Panc1 (cell line): ENCODE measurements at regions of chr17 and their contacts with region 1.

Region 1: DNA sequence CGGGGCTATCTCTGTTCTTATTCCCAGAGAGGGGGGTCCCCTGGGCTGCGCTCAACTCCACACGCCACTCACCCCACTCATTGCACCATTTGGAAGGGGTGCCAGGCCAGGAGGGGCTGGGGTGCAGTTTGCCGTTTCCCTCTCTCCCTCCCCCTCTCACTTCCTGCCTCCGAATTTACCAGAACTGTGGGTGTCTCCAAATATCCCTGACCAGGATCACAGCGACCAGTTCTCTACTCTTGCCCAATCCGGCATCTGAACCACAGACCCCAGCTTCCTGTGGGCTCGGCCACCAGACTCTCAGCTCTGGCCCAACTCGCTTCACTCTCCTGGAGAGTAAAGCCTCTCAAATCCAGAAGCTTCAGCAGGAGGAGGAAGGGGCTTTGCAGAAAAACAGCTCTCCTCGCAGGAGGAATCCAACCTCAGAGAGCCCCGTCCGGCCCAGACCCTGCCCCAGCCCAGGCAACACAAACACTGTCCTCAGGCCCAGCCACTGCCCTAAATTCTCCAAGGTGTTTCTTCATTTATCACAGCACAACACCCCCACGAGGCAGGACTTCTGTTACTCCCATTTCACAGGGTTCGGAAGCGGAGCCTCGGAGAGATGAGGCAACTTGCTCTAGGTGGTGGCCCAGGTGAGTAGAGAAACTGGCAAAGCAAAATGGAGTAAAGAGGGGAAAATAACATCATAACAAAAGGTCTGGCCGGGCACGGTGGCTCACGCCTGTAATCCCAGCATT is 423 bp upstream of the ASGR2 start:
- DNase-seq: no peak
- ATAC-seq: no peak
- H3K4me3 ChIP-seq: no peak overlapping the region
- H3K27ac ChIP-seq: no peak overlapping the region
- H3K4me1 ChIP-seq: no peaks in the 10 kb centered on the region
- H3K27me3 ChIP-seq: no peaks in the 10 kb centered on the region
- CTCF ChIP-seq: no peak

Region 2: DNA sequence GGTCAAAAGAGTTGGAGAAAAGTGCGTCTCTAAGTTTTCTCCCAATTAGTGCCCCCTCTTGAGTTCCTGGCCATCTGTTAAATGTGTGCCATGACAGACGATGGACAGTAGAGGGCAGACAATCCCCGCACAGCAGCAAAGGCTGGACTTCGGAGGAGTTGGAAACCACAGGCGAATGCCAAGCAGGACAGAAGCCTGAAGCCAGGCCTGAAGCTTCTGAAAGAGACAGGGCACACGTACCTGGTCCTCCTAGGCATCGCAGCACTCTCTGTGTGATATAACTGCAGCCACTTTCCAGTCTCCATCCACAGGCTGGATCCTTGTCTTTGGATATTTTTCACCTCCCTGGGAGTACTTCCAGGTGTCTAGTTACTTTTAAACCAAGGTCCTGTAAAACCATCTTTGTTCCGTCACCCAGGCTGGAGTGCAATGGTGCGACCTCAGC is 448.9 kb before region 1 on chr17:
- CTCF ChIA-PET with region 1: no interaction called
- POLR2A ChIA-PET with region 1: no interaction called
- in situ Hi-C with region 1: no loop called
- intact Hi-C with region 1: no loop called
- DNase-seq: no peak
- ATAC-seq: peak; percentile 93
- H3K4me3 ChIP-seq: no peak overlapping the region
- H3K27ac ChIP-seq: no peak overlapping the region
- H3K4me1 ChIP-seq: no peaks in the 10 kb centered on the region
- H3K27me3 ChIP-seq: peaks cover 3% of the 10 kb centered on the region; the same call in 1 of the 2 replicates
- CTCF ChIP-seq: peak; percentile 92

Region 3: DNA sequence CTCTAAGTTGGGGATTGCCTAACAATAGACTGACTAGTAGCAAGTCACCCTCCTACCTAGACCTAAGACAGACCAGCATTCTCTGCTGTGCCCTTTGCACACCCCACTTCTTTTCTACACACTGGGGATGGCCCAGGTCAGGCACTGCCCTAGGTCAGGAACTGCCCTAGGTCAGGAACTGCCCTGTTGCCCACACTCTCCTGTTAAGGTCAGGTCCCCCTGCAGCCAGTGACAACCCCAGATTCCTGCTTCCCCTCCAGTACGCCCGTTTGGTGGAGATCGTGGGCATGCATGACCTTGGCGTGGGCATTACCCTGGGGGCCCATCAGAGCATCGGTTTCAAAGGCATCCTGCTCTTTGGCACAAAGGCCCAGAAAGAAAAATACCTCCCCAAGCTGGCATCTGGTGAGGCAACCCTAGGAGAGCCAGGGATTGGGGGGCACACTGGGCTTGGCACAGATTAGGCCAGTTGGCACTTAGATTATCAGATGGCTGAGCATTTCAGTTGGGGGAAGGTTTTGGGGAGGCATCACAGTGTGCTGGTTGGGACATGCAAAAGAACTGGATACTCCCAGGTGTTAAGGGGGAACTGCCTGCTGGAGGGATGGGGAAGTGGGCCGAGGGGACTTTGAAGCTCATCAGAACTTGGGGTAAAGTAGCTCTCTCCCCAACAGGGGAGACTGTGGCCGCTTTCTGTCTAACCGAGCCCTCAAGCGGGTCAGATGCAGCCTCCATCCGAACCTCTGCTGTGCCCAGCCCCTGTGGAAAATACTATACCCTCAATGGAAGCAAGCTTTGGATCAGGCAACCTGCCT is 106.4 kb after region 1 on chr17:
- CTCF ChIA-PET with region 1: interaction called, 12 read pairs
- POLR2A ChIA-PET with region 1: no interaction called
- in situ Hi-C with region 1: no loop called
- intact Hi-C with region 1: no loop called
- DNase-seq: no peak
- ATAC-seq: no peak
- H3K4me3 ChIP-seq: peak overlapping the region; percentile 73 to 78; a peak in 3 of 4 replicates
- H3K27ac ChIP-seq: peak overlapping the region; percentile 95
- H3K4me1 ChIP-seq: peaks cover 69% of the 10 kb centered on the region
- H3K27me3 ChIP-seq: no peaks in the 10 kb centered on the region
- CTCF ChIP-seq: no peak